ENCODE measurements at regions of chr13 and their contacts with region 1.

Region 1: DNA sequence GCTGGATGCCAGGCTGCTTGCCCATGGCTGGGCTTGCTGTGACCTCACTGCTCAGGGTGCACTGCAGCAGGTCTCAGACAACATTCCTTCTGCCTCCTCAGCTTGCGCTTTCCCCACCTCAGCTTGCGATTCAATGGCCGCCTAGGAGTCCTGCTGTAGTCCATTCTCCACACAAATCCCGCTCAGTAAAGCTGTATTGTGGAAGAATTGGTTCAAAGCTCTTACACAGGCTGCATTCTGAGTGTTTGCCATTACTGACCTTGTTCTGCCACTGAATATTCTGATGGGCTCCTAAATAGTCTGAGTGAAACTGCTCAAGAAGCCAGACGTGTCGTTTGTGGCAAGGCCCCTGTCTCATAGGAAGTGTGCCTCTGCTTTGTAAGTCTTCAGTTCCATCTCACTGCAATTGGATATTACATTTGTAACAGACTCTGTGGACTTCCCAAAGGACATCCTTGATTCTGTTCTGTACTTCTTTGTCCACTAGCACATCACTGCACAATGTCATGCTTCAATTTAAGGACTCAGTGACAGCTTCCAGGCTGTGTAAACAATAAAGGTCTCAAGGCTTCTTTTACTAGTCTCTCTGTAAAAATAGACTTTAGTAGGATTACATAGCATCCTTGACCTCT is 49.8 kb downstream of the KATNAL1 start:
- DNase-seq: no peak
- ATAC-seq: peak; percentile 70
- H3K4me3 ChIP-seq: no peak overlapping the region
- H3K27ac ChIP-seq: no peak overlapping the region
- H3K4me1 ChIP-seq: no peaks in the 10 kb centered on the region
- H3K27me3 ChIP-seq: no peaks in the 10 kb centered on the region
- CTCF ChIP-seq: no peak

Region 2: DNA sequence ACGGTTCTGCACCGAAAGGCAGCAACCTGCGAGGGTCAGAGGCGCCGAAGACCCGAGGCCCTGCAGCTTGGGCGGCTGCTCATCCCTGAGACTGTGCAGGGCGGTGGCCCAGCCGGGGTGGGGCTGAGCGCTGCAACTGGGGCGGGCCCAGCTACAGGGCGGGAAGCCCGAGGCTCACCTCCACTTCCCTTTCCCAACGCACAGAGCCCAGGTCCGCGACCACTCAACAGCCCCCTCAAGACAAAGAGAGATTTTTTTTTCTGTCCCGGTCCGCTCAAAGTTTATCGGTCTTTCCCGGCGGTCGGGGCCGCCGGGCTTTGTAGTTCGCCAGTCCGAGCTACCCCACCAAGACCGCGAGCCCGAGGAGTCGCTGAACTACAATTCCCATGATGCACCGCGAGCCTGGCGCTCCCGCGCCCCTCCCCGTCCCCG is 49.2 kb after region 1 on chr13:
- CTCF ChIA-PET with region 1: no interaction called
- POLR2A ChIA-PET with region 1: no interaction called
- intact Hi-C with region 1: loop called (anchors 5 kb)
- DNase-seq: peak; percentile 90
- ATAC-seq: peak; percentile 91
- H3K4me3 ChIP-seq: peak overlapping the region; percentile 78
- H3K27ac ChIP-seq: peak overlapping the region; percentile 23
- H3K4me1 ChIP-seq: peaks cover 22% of the 10 kb centered on the region
- H3K27me3 ChIP-seq: no peaks in the 10 kb centered on the region
- CTCF ChIP-seq: no peak

Region 3: GRCh38 chr13:30341815-30342570 is 84.4 kb after region 1 on chr13:
- CTCF ChIA-PET with region 1: no interaction called
- POLR2A ChIA-PET with region 1: interaction called, 12 read pairs
- intact Hi-C with region 1: no loop called
- DNase-seq: peak; percentile 90
- ATAC-seq: peak; percentile 94
- H3K4me3 ChIP-seq: no peak overlapping the region
- H3K27ac ChIP-seq: 0 out of 2 replicates have a peak overlapping the region, but pooled peaks have one; percentile 15
- H3K4me1 ChIP-seq: peaks cover 44% of the 10 kb centered on the region
- H3K27me3 ChIP-seq: no peaks in the 10 kb centered on the region
- CTCF ChIP-seq: no peak

Region 4: DNA sequence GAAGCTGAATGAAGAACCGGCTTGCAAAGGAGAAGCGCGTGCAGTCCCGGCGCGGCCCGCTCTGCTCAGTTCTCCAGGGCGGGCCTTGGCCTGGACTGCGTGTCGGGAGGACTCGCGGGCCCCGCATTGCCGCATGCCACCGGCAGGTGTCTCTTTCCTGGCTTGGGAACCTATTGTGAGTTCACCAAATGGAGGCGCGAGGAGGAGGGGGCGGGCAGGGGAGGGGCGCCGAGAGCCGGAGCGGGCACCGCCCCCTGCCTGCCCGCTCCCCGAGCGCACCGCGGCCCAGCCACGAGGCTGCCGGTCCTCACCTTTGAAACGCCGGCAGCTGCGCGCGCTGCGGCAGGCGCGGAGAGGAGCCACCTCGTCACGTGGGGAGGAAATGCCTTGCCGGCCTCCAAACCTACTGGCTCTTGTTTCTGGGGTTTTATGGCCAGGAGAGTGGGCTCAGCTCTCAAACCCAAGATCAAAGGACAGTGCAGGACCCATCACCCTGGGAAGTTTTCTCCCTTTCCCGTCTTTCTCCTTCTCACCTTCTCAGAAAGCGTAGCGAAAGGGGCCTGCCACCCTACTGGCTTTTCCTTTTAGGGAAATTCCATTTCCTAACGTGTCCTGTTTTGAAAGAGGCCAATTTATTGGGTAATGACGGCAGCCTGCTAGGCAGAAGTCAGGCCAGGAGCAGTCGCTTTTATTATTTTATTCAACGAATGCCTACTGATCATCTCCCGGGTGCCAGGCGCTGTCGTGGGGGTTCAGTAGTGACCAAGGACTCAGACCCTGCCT is 150.9 kb after region 1 on chr13:
- CTCF ChIA-PET with region 1: no interaction called
- POLR2A ChIA-PET with region 1: no interaction called
- intact Hi-C with region 1: loop called (anchors 5 kb)
- DNase-seq: peak; percentile 89
- ATAC-seq: peak; percentile 98
- H3K4me3 ChIP-seq: peak overlapping the region; percentile 54
- H3K27ac ChIP-seq: no peak overlapping the region
- H3K4me1 ChIP-seq: peaks cover 12% of the 10 kb centered on the region; the same call in 1 of the 2 replicates
- H3K27me3 ChIP-seq: no peaks in the 10 kb centered on the region
- CTCF ChIP-seq: peak; percentile 57

Region 5: GRCh38 chr13:30665638-30666037 is 408.1 kb after region 1 on chr13:
- CTCF ChIA-PET with region 1: no interaction called
- POLR2A ChIA-PET with region 1: no interaction called
- intact Hi-C with region 1: no loop called
- DNase-seq: no peak
- ATAC-seq: no peak
- H3K4me3 ChIP-seq: no peak overlapping the region
- H3K27ac ChIP-seq: no peak overlapping the region
- H3K4me1 ChIP-seq: no peaks in the 10 kb centered on the region
- H3K27me3 ChIP-seq: no peaks in the 10 kb centered on the region
- CTCF ChIP-seq: no peak